Activated T-helper 2 cell treated with anti-CD3 and anti-CD28 coated beads, Interferon-gamma antibody, Interleukin-2, Interleukin-4, amounts not matched to agents 10 μg/mL and 5 μg/mL and 100 μg/mL, durations not matched to agents 14 hours and 24 hours and 36 hours (primary cell): ENCODE measurements at regions of chr16 and their contacts with region 1.

Region 1: GRCh38 chr16:50024684-50025536 is at the start of gene CNEP1R1:
- DNase-seq: peak; percentile 93
- H3K4me3 Mint-ChIP-seq: peak within 1 kb of the TSS; percentile 95
- H3K27ac Mint-ChIP-seq: peak within 1 kb of the TSS; percentile 84
- H3K4me1 Mint-ChIP-seq: peaks cover 18% of the 10 kb centered on the region
- H3K27me3 Mint-ChIP-seq: peaks cover 4% of the 10 kb centered on the region
- total RNA-seq, gene CNEP1R1: 23.4 and 26.1 TPM in 2 replicates

Region 2: GRCh38 chr16:50741808-50742575 is 717.1 kb after region 1 on chr16 and contains the start of gene CYLD:
- intact Hi-C with region 1: loop called (anchors 10 kb)
- DNase-seq: peak; percentile 100
- H3K4me3 Mint-ChIP-seq: peak within 1 kb of the TSS; percentile 90
- H3K27ac Mint-ChIP-seq: peak within 1 kb of the TSS; percentile 95
- H3K4me1 Mint-ChIP-seq: peaks cover 43% of the 10 kb centered on the region
- H3K27me3 Mint-ChIP-seq: no peaks in the 10 kb centered on the region
- total RNA-seq, gene CYLD: 189 and 201 TPM in 2 replicates